Left lung (tissue), 14 donors: ENCODE measurements at regions of chr19 and their contacts with region 1.

Region 1: DNA sequence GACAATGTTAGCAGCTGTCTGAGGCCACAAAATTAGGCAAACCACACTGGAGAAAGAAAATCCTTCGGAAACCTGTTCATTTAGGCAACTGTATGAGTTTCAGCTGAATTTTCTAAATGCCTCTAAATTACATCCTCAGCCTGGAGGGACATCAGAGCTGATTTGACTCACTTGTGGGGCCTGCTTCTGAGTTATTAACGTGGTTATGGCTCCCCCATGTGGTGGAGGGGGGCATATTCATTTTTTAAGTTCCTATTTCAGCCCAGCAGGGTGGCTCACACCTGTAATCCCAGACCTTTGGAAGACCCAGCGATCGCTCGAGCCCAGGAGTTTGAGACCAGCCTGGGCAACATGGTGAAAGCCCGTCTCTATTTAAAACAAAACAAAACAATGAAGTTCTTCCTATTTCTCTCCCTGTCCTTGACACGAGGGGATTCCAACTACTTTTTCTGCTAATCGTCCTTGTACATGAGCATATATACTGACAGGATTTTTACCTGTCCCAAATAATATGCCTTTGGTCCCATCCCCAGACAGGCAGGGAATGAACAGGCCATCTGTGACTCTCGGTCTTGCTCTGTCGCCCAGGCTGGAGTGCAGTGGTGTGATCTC is 31.5 kb upstream of the HIF3A start:
- DNase-seq: peak in 2 of 4 donors; percentile 68 to 86
- ATAC-seq: peak; percentile 93
- H3K4me3 ChIP-seq: no peak overlapping the region
- H3K27ac ChIP-seq: no peak overlapping the region
- H3K4me1 ChIP-seq: peaks cover 0 to 4% of the 10 kb centered on the region in 2 donors
- H3K27me3 ChIP-seq: peaks cover 0 to 69% of the 10 kb centered on the region in 2 donors
- CTCF ChIP-seq: peak; percentile 81 to 83

Region 2: DNA sequence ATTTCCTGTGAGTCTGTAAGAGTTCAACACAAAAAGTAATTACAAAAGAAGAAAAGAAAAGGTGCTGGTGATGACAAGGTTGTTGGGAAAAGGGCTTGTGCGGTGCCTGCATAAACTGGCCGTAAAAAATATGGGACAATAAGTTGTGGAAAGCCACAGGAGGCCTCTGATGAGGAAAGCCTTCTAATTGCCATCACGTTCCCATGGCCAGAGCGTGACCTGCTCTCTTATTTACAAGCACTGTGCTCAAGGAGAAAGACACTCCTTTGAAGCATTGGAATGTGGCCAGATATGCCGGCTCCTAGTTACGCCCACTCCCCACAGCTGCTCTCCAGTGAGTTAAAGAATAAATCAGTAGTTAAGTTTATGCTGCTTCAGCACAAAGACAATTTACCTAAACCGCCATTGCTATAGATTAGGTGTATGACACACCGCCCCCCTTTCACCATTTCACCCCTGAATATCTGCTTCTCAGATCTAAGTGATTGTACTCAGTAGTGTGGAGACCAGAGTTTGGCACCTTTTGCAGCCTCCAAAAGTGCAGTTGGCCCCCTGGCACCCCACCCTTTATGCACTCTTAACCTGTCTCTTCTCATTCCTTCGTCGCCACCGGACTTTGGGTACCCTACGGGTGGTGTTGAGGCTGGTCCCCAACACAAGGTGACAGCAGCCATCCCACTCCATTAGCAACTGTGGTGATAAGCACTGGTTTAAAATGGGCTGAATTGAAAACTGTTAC is 234.3 kb before region 1 on chr19:
- intact Hi-C with region 1: loop called in 1 of 2 experiments (anchors 5 kb)
- DNase-seq: no peak
- ATAC-seq: no peak
- H3K4me3 ChIP-seq: no peak overlapping the region
- H3K27ac ChIP-seq: no peak overlapping the region
- H3K4me1 ChIP-seq: peaks cover 0 to 9% of the 10 kb centered on the region in 2 donors
- H3K27me3 ChIP-seq: peaks cover 0 to 29% of the 10 kb centered on the region in 2 donors
- CTCF ChIP-seq: no peak

Region 3: GRCh38 chr19:46076951-46077816 is 188.1 kb before region 1 on chr19:
- intact Hi-C with region 1: loop called in 1 of 2 experiments (anchors 5 kb)
- DNase-seq: peak in 2 of 4 donors; percentile 27 to 63
- ATAC-seq: peak; percentile 90
- H3K4me3 ChIP-seq: no peak overlapping the region
- H3K27ac ChIP-seq: no peak overlapping the region
- H3K4me1 ChIP-seq: peaks cover 0 to 8% of the 10 kb centered on the region in 2 donors
- H3K27me3 ChIP-seq: peaks cover 43 to 88% of the 10 kb centered on the region in 2 donors
- CTCF ChIP-seq: peak; percentile 47 to 74